GM10248 (cell line): ENCODE measurements at regions of chr20 and their contacts with region 1.

Region 1: DNA sequence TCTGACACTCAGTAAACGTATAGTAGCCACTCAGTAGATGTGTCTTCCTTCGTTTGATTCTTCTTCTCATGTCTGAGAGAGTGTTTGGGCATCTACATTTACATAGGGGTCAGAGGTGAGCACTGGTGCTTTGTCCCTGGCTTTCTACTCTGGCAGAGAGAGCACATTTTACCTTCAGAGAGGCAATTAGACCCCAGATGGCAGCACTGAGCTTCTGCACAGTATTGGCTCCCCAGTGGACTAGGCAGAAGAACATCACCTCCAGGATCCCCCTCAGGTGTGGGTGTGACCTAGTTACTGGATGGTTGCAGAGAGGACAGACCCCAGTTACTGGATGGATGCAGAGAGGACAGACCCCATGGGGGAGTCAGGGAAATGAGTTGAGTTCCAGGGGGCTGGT is 327.2 kb downstream of the DHX35 start:
- DNase-seq: peak; percentile 20
- CTCF ChIP-seq: peak; percentile 52

Region 2: DNA sequence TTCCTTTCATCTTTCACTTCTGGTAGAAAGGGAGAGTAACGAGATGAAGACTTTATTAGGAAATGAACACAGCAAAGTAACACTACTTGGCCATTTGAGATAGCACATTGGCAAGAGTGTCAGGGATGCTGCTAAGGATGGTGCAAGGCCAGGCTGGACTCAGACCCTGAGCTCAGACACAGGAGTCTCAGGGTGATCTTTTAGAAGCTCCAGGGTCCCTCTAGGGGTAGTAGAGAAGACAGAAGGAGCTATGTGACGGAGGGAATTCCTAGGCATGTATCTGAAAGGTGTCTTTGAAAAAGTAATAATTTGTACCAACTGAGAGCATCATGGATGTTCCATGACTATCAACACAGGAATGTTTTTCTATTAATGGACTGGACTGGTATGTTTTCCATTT is 109.3 kb after region 1 on chr20:
- CTCF ChIA-PET with region 1: interaction called, 17 read pairs
- POLR2A ChIA-PET with region 1: no interaction called
- DNase-seq: no peak
- CTCF ChIP-seq: peak; percentile 9